Heart right ventricle (tissue), 16 donors: ENCODE measurements at regions of chr4 and their contacts with region 1.

Region 1: GRCh38 chr4:169059306-169060211 is 49.5 kb upstream of the CBR4 start:
- DNase-seq: peak; percentile 20 to 75
- ATAC-seq: peak; percentile 75 to 92 (median 83)
- H3K4me3 ChIP-seq: peak overlapping the region in 4 of 10 donors; percentile 3 to 26 (median 10)
- H3K27ac ChIP-seq: peak overlapping the region; percentile 77 to 91 (median 86)
- H3K4me1 ChIP-seq: peaks cover 18 to 57% (median 45%) of the 10 kb centered on the region in 9 donors
- H3K27me3 ChIP-seq: no peaks in the 10 kb centered on the region
- CTCF ChIP-seq: no peak

Region 2: DNA sequence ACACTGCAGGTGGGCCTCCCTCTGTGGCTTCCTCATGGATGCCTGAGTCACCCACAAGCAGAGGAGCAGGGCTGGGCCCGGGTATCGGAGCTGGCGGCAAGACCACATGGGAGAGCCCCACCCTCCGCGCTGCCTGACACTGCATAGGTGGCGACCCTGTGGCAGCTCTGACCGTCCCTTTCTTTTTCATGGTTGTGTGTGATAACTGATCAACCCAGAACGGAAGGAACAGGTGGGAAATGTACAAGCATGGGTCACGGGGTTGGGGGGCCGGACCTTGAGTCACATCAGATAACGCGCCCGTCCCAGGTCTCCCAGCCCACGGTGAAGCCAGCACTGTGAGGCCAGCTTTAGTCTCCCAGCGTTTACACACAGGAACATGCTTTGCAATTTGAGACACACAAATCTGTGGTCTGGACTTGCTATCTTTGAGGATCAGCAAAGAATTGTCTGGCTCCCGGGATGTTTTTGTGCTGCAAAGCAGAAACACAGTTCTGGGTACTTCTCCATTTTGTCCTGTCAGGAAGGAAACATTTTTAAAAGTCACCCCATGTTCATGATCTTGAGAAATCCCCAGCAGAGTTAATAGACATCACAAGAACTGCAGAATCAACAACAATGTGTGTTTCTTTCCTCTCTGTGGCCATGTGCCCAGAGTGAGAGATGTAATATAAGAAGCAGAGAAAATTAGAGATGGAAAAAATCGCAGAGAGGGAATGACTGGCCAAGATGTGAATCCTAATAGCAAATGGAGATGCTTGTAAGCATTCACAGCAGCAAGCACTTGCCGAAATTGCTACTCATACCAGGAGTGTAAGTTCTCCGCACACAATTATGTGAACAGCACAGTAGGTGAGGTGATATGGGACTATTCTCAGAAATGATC is 20.6 kb after region 1 on chr4:
- intact Hi-C with region 1: loop called in 1 of 10 experiments (anchors 2 kb)
- DNase-seq: peak; percentile 31 to 50
- ATAC-seq: peak; percentile 62 to 89 (median 80)
- H3K4me3 ChIP-seq: peak overlapping the region in 7 of 10 donors; percentile 6 to 34 (median 19)
- H3K27ac ChIP-seq: peak overlapping the region; percentile 68 to 89 (median 78)
- H3K4me1 ChIP-seq: peaks cover 5 to 31% (median 25%) of the 10 kb centered on the region in 9 donors
- H3K27me3 ChIP-seq: no peaks in the 10 kb centered on the region
- CTCF ChIP-seq: no peak